ENCODE measurements at regions of chr4 and their contacts with region 1.

Region 1: DNA sequence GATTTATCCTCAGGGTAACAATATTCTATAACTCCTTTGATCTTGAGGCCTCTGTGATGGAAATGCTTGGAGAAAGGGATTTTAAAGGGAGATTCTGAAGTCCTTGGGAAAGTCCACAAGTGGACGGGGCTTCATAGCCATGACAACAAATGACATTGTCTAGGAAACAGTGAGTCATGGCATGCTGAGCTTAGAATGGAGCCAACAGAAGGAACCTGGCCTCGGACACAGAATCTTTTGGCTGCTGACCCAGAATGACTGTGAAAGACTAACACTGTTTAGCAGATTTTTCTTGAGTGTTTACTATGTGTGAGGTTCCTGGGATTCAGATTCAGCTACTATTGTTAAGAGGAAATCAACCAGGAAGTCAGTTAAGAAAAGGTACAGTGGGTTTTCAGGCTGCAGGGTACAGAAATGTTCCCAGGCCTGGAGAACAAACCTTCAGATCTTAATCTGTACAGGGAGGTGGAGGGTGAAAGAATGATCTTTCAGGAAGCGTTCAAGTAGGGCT is 18.1 kb upstream of the CXCL2 start:
- DNase-seq: no peak
- ATAC-seq: peak; percentile 87; the same call in 1 of the 2 replicates
- H3K4me3 ChIP-seq: no peak overlapping the region
- H3K27ac ChIP-seq: no peak overlapping the region
- H3K4me1 ChIP-seq: no peaks in the 10 kb centered on the region
- H3K27me3 ChIP-seq: no peaks in the 10 kb centered on the region
- CTCF ChIP-seq: no peak

Region 2: DNA sequence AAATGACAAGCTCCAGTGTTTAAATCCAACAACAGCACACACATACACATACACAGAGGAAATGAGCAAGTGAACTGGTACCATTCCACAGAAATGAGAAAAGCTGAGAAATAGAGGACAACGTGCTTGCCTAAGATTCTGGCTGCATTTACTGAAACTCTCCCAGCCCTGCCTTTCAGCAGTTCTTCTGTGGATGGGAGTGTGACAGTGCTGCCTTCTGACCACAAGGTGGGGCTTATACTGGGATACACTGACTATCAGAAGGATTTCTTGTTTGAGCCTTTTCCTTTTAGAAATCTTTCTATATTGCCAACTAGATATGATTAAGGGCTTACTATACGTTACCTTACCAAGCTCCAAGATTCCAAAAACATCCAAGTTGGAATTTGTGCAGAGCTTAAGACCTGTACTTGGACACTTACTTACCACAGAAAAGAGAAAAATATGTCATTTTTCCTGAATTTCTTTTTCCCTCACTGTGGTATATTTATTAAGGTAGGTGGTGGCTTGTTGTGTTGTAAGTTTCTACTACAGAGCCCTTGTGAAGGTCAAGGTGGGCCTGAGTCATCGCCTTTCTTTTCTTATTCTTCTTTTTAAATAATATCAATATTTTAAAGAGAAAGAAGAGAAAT is 387.4 kb before region 1 on chr4:
- CTCF ChIA-PET with region 1: no interaction called
- POLR2A ChIA-PET with region 1: no interaction called
- in situ Hi-C with region 1: no loop called
- intact Hi-C with region 1: loop called (anchors 10 kb)
- DNase-seq: peak; percentile 38
- ATAC-seq: peak; percentile 92
- H3K4me3 ChIP-seq: no peak overlapping the region
- H3K27ac ChIP-seq: peak overlapping the region; percentile 60
- H3K4me1 ChIP-seq: no peaks in the 10 kb centered on the region
- H3K27me3 ChIP-seq: no peaks in the 10 kb centered on the region
- CTCF ChIP-seq: peak; percentile 79